ENCODE measurements at regions of chr18 and their contacts with region 1.

Region 1: DNA sequence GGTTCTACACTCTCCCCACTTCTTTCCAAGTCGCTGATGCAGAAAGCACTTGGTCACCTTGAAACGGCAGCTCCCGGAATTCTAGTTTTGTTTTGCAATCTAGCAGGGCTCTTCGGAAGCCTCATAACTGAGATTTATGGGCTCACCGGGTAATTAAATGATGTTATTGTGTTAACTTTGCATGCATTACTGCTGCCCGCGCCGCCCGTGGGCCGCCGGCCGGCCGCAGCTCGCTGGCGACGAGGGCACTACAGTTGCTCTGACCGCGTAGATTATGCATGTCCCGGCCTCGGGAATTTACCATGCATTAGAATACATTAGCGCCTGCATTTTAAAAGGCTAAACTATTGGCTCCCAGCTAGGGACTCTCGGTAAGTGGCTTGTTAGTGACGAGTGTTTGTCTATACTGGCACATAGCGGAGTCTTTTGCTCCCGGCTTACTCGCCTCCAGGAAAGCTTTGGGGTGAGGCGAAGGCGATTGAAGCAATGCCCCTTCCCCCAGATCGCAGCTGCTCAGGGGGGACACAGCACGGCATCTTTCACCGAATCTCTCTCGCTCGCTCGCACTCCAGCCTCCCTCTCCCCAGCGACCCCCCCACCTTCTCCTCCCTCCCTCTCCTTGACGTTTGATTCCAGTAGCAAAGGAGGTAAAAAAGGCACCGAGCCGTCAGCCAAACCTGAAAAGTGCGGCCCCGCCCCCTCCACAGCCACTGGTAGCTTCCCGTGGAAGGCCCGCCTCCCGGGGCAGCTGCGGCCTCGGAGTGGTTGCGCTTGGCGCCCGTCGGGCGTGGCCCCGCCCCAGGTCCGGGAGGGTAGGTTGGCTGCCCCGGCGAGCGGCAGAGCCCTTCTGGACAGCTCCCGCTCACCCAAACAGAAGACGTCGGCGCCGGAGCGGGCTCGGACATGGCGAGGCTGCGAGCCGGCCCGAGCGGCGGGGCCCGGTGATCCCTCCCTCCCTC is at the start of gene ONECUT2:
- DNase-seq: peak; percentile 42
- H3K4me3 ChIP-seq: peak within 1 kb of the TSS; percentile 48
- H3K27me3 ChIP-seq: peaks cover 66% of the 10 kb centered on the region
- CTCF ChIP-seq: no peak
- polyA plus RNA-seq, gene ONECUT2: 0.01 TPM in 1 of 2 replicates, not detected in the other

Region 2: GRCh38 chr18:57004366-57005121 is 430.3 kb before region 1 on chr18:
- CTCF ChIA-PET with region 1: no interaction called
- POLR2A ChIA-PET with region 1: interaction called, 13 read pairs
- DNase-seq: peak; percentile 16
- H3K4me3 ChIP-seq: no peak overlapping the region
- H3K27me3 ChIP-seq: no peaks in the 10 kb centered on the region
- CTCF ChIP-seq: no peak

Region 3: GRCh38 chr18:57446322-57446721 is 11.5 kb after region 1 on chr18:
- CTCF ChIA-PET with region 1: no interaction called
- POLR2A ChIA-PET with region 1: no interaction called
- DNase-seq: no peak
- H3K4me3 ChIP-seq: no peak overlapping the region
- H3K27me3 ChIP-seq: peaks cover 14% of the 10 kb centered on the region
- CTCF ChIP-seq: peak; percentile 57

Region 4: GRCh38 chr18:58321986-58322385 is 887.2 kb after region 1 on chr18:
- CTCF ChIA-PET with region 1: no interaction called
- POLR2A ChIA-PET with region 1: interaction called, 14 read pairs
- DNase-seq: peak; percentile 50
- H3K4me3 ChIP-seq: no peak overlapping the region
- H3K27me3 ChIP-seq: no peaks in the 10 kb centered on the region
- CTCF ChIP-seq: peak; percentile 63

Measured in BJ (cell line).